ENCODE measurements at regions of chr2 and their contacts with region 1.

Region 1: GRCh38 chr2:135797497-135798274 is 39.3 kb downstream of the LCT start:
- DNase-seq: peak; percentile 26 to 36
- ATAC-seq: peak; percentile 56 to 84
- H3K4me3 ChIP-seq: no peak overlapping the region
- H3K27ac ChIP-seq: no peak overlapping the region
- H3K4me1 ChIP-seq: no peaks in the 10 kb centered on the region
- H3K27me3 ChIP-seq: no peaks in the 10 kb centered on the region
- CTCF ChIP-seq: peak; percentile 49 to 85 (median 73)
- POLR2A ChIP-seq: no peak

Region 2: DNA sequence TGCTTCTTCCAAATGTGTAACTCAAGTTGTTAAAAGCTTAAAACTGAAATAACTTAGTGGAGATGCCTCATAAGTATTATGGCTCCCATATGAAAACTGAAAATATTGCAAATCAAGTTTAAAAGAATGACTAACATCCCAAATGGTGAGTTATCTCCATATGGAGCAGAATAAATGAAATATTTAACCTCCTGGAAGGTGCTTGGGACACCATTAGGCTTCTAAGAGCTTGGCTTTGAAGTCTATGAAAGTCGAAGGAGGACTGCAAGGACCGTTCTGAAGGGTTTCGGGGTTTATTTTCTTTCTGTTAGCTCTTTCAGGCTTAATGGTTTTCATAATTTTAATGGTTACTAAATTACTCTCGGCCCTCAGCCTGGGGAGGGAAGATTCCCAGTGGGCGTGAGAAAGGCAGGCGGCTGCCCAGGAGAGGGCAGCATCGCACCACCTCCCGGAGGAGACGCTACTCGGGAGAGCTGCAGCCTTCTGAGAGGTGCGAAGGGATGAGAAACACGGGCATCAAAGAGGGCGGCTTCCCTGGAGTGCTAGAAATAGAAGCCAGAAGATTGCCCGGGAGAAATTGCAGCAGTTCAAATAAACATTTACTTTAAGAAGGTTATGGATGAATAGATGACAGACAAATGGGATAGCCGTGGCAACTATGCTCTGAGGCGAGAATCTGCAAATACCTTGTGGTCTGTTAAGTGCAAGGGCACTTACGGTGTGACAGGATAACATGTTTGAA is 793.5 kb before region 1 on chr2:
- in situ Hi-C with region 1: no loop called
- intact Hi-C with region 1: loop called (anchors 10 kb)
- DNase-seq: peak; percentile 38 to 42
- ATAC-seq: peak; percentile 74 to 91
- H3K4me3 ChIP-seq: no peak overlapping the region
- H3K27ac ChIP-seq: no peak overlapping the region
- H3K4me1 ChIP-seq: peaks cover 0 to 6% of the 10 kb centered on the region in 2 donors
- H3K27me3 ChIP-seq: peaks cover 0 to 13% (median 0%) of the 10 kb centered on the region in 3 donors
- CTCF ChIP-seq: peak; percentile 58 to 92 (median 74)
- POLR2A ChIP-seq: no peak

Region 3: DNA sequence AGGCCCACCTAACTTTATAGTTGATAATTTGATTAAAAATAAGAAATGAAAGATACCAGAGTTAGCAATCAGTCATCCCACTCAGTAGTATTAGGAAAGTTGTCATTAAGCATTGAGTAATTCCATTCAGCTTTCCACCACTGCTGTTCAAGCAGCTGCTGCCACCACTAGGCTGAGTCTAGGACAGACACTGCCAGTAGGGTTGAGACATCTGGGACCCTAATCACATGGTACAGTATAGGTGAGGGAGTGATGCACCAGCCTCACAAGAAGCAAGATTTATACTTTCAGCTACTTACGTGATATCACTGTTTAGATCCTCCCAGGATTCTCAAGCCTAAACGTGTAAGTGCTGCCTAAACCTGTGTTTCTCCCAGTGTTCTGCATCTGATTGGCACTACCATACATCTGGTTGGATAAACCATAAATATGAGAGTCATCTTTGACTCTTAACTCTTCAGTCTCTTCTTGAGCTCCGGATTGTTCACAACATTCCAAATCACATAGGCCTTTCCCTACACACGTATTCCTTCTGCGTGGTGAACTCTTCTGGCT is 52.8 kb before region 1 on chr2:
- in situ Hi-C with region 1: no loop called
- intact Hi-C with region 1: no loop called
- DNase-seq: peak in 1 of 2 donors; percentile 29
- ATAC-seq: no peak
- H3K4me3 ChIP-seq: no peak overlapping the region
- H3K27ac ChIP-seq: peak overlapping the region in 3 of 4 donors; percentile 17 to 99 (median 98)
- H3K4me1 ChIP-seq: peaks cover 33 to 40% of the 10 kb centered on the region in 2 donors
- H3K27me3 ChIP-seq: no peaks in the 10 kb centered on the region
- CTCF ChIP-seq: no peak
- POLR2A ChIP-seq: no peak

Measured in gastrocnemius medialis (tissue), 4 donors.